Left ventricle myocardium inferior (tissue), 1 donor: ENCODE measurements at regions of chr18 and their contacts with region 1.

Region 1: DNA sequence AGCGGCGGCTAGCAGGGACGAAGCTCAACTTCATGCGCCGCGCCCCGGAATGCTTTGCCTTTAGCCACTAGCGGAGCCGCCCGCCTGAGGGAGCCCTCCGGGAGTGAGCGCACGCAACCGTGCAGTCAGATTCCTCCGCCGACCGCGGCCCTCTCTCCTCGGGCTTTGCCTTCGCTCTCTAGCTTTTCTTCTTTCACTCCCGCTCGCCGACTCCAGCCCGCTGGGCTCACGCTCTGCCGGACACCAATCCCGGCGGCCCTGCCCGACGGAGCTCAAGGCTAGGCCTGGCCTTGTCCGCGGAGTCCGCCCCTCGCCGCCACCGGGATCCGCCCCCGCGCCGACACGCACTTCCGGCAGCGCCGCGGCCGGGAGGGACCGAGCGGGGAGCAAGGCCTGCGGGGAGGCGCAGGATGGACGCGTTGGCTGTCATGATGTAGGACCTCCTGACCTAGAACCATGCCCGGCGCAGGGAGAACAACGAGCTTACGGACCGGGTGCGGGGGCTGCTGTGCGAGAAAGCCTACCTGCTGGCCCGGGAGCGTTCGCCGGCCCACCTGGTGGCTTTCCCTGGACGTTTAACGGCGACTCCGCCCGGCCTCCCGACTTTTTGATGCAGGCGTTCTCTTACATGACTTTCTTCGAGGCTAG is 40.8 kb upstream of the AKAIN1 start:
- DNase-seq: peak; percentile 89
- H3K4me3 ChIP-seq: peak overlapping the region; percentile 80
- H3K27ac ChIP-seq: peak overlapping the region; percentile 99
- H3K4me1 ChIP-seq: peaks cover 62% of the 10 kb centered on the region
- H3K27me3 ChIP-seq: no peaks in the 10 kb centered on the region
- CTCF ChIP-seq: peak; percentile 67

Region 2: DNA sequence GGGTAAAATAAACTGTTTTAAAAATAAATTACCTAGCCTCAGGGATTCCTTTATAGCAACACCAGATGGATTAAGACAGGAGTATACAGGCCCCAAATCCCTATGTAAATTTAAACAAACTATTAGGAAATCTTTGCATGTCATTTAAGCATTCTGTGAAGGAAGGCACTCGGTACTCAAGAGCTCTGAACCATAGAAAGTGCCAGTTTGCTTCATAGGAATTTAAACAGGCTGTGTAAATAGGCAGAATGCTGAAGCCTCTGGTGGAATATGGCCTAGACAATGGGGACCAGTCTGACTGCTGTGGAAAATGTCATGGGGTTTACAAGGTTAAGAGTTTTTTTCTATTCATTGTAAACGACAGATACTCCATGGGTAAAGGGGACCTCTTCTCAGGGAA is 1160.1 kb before region 1 on chr18:
- intact Hi-C with region 1: no loop called
- DNase-seq: no peak
- H3K4me3 ChIP-seq: no peak overlapping the region
- H3K27ac ChIP-seq: no peak overlapping the region
- H3K4me1 ChIP-seq: no peaks in the 10 kb centered on the region
- H3K27me3 ChIP-seq: peaks cover 20% of the 10 kb centered on the region
- CTCF ChIP-seq: no peak

Region 3: GRCh38 chr18:5159080-5159479 is 78.8 kb before region 1 on chr18:
- intact Hi-C with region 1: no loop called
- DNase-seq: no peak
- H3K4me3 ChIP-seq: no peak overlapping the region
- H3K27ac ChIP-seq: no peak overlapping the region
- H3K4me1 ChIP-seq: peaks cover 9% of the 10 kb centered on the region
- H3K27me3 ChIP-seq: no peaks in the 10 kb centered on the region
- CTCF ChIP-seq: no peak

Region 4: GRCh38 chr18:5295981-5296705 is 58.3 kb after region 1 on chr18:
- intact Hi-C with region 1: loop called (anchors 5 kb)
- DNase-seq: peak; percentile 97
- H3K4me3 ChIP-seq: peak overlapping the region; percentile 85
- H3K27ac ChIP-seq: peak overlapping the region; percentile 99
- H3K4me1 ChIP-seq: peaks cover 26% of the 10 kb centered on the region
- H3K27me3 ChIP-seq: peaks cover 6% of the 10 kb centered on the region
- CTCF ChIP-seq: no peak